ENCODE measurements at regions of chr11 and their contacts with region 1.

Region 1: DNA sequence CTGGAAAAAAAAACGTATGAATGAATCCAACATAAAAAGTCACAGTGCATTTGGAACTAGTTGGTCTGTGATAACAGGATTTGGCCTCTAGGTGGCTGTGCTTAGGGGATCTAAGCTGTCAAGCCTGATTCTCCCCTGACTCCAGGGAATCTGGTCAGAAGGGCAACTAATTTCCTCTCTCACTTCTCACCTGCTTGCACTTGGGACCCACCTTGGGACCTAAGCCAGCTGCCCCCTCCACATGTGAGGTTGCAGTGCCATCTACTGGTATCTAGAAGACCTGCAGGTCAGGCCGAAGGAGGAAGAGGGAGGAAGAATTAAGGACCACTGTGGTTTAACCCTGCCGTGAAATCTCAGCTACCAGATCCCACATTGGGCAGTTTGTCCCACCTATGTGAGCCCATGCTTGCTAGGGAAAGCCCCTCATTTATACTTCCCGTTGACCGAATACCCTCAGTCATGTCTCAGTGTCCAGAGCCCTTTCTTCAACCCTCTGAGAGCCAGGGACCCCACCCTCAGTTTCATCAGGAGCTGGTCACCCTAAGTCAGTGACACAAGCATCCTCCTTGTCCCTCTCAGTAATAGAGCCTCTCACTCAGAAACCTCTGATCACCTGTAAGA is 33.2 kb upstream of the CAVIN3 start:
- DNase-seq: peak; percentile 62
- H3K4me3 ChIP-seq: peak overlapping the region in 1 of 2 experiments; percentile 14; a peak in 1 of 4 replicates
- H3K27ac ChIP-seq: no peak overlapping the region
- H3K4me1 ChIP-seq: peaks cover 0 to 5% of the 10 kb centered on the region in 2 experiments; a peak in 1 of 4 replicates
- H3K27me3 ChIP-seq: peaks cover 20% of the 10 kb centered on the region; the same call in 1 of the 2 replicates
- CTCF ChIP-seq: peak; percentile 98
- EP300 ChIP-seq: no peak
- RAD21 ChIP-seq: peak; percentile 89

Region 2: DNA sequence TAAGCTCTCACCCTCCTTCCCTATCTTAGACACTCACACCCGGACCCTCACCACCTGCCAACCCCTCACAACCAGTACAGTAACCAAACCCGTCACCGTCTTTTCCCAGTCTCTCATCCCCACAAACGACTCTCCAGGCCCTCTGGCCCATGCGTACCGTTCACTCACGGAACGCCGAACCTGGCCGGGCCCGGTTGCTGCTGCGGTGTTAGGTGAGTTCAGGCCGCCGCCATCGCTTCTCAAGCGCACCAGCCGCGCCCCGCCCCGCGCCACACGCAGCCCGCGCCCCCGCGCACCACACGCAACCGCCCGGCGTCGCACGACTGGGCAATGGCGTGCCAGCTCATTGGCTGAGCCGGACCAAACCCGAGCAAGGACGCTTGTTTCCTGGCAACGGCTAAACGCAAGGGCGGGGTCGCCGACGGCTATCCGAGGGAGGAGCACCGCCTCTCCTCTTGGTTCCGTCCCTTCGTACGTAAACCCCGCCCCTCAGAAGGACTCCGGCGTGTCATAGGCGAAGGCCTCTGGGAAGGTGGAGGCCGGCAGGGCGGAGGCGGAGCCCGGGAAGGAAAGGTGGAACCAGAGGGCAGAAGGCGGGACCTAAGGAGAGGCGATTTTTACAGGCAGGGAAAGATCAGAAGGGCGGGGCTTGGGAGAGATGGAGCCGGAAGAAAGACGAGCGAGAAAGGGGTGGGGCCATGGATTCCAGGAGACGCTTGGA is 118.9 kb before region 1 on chr11 and contains the start of gene FHIP1B:
- CTCF ChIA-PET with region 1: interaction called, 13 read pairs
- POLR2A ChIA-PET with region 1: no interaction called
- DNase-seq: peak; percentile 95
- H3K4me3 ChIP-seq: peak within 1 kb of the TSS; percentile 67 to 90
- H3K27ac ChIP-seq: peak within 1 kb of the TSS; percentile 69 to 79
- H3K4me1 ChIP-seq: peaks cover 0 to 8% of the 10 kb centered on the region in 2 experiments; a peak in 1 of 4 replicates
- H3K27me3 ChIP-seq: peaks cover 12% of the 10 kb centered on the region
- CTCF ChIP-seq: no peak
- EP300 ChIP-seq: no peak
- RAD21 ChIP-seq: no peak
- polyA plus RNA-seq, gene FHIP1B: 26.3 and 38.2 TPM in 2 replicates

Region 3: GRCh38 chr11:6251120-6251733 is 102.2 kb before region 1 on chr11:
- CTCF ChIA-PET with region 1: interaction called, 82 read pairs
- POLR2A ChIA-PET with region 1: no interaction called
- DNase-seq: peak; percentile 79
- H3K4me3 ChIP-seq: no peak overlapping the region; a peak in 1 of 4 replicates
- H3K27ac ChIP-seq: no peak overlapping the region
- H3K4me1 ChIP-seq: no peaks in the 10 kb centered on the region; a peak in 1 of 4 replicates
- H3K27me3 ChIP-seq: peaks cover 8% of the 10 kb centered on the region; the same call in 1 of the 2 replicates
- CTCF ChIP-seq: peak; percentile 73
- EP300 ChIP-seq: no peak
- RAD21 ChIP-seq: peak; percentile 62

Region 4: DNA sequence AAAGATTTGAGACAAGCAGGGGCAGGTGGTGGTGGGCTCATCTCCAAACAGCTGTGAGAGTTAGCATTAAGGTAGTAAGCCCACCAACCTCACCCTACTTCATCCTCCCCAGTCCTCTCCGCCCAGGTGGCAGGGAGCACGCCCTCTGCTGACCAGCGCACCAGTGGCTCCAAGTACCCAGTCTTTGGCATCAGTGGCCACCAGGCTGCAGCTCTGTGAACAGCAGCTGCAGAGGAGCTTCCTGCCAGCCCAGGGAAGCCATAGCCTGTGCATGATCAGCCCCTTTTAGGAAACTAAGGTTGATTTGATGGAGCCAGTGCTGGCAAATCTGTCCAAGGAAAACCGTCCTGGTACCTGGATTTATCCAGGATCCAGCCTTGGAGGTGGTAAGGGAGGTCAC is 54.9 kb before region 1 on chr11:
- CTCF ChIA-PET with region 1: interaction called, 10 read pairs
- POLR2A ChIA-PET with region 1: no interaction called
- DNase-seq: peak; percentile 27
- H3K4me3 ChIP-seq: no peak overlapping the region
- H3K27ac ChIP-seq: no peak overlapping the region
- H3K4me1 ChIP-seq: no peaks in the 10 kb centered on the region
- H3K27me3 ChIP-seq: peaks cover 17% of the 10 kb centered on the region; the same call in 1 of the 2 replicates
- CTCF ChIP-seq: peak; percentile 58
- EP300 ChIP-seq: no peak
- RAD21 ChIP-seq: peak; percentile 26; the same call in 1 of the 2 replicates

Region 5: GRCh38 chr11:6315811-6316425 is 37.6 kb before region 1 on chr11:
- CTCF ChIA-PET with region 1: interaction called, 20 read pairs
- POLR2A ChIA-PET with region 1: no interaction called
- DNase-seq: peak; percentile 79
- H3K4me3 ChIP-seq: no peak overlapping the region
- H3K27ac ChIP-seq: no peak overlapping the region
- H3K4me1 ChIP-seq: no peaks in the 10 kb centered on the region; a peak in 1 of 4 replicates
- H3K27me3 ChIP-seq: peaks cover 5% of the 10 kb centered on the region; the same call in 1 of the 2 replicates
- CTCF ChIP-seq: peak; percentile 80
- EP300 ChIP-seq: no peak
- RAD21 ChIP-seq: peak; percentile 77

Region 6: DNA sequence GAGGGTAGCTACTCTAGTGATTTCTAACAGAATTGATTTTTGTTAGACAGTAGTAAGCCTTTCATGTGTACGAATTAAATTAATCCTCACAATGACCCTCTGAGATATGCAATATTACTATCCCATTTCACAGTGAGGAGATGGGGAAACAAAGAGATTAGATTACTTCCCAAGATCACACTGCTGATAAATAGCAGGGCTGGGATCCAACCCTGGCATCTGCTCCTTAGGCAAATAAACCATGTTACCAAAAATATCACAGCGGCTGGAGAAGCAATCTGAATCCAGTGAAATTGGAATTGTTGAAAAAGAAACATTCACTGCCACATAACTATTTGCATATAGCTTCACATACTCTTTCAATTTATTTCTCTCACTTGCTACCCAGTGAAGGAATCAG is 20.4 kb before region 1 on chr11:
- CTCF ChIA-PET with region 1: interaction called, 30 read pairs
- POLR2A ChIA-PET with region 1: no interaction called
- DNase-seq: peak; percentile 26
- H3K4me3 ChIP-seq: no peak overlapping the region
- H3K27ac ChIP-seq: no peak overlapping the region
- H3K4me1 ChIP-seq: peaks cover 0 to 2% of the 10 kb centered on the region in 2 experiments; a peak in 2 of 4 replicates
- H3K27me3 ChIP-seq: peaks cover 15% of the 10 kb centered on the region; the same call in 1 of the 2 replicates
- CTCF ChIP-seq: no peak
- EP300 ChIP-seq: peak in 1 of 2 experiments; percentile 23; a peak in 1 of 4 replicates
- RAD21 ChIP-seq: no peak

Region 7: GRCh38 chr11:6404342-6405051 is 51.0 kb after region 1 on chr11:
- CTCF ChIA-PET with region 1: no interaction called
- POLR2A ChIA-PET with region 1: no interaction called
- DNase-seq: no peak
- H3K4me3 ChIP-seq: no peak overlapping the region
- H3K27ac ChIP-seq: no peak overlapping the region
- H3K4me1 ChIP-seq: peaks cover 0 to 13% of the 10 kb centered on the region in 2 experiments; a peak in 1 of 4 replicates
- H3K27me3 ChIP-seq: no peaks in the 10 kb centered on the region
- CTCF ChIP-seq: no peak
- EP300 ChIP-seq: no peak
- RAD21 ChIP-seq: no peak